Posterior vena cava (tissue), 2 donors: ENCODE measurements at regions of chr2 and their contacts with region 1.

Region 1: DNA sequence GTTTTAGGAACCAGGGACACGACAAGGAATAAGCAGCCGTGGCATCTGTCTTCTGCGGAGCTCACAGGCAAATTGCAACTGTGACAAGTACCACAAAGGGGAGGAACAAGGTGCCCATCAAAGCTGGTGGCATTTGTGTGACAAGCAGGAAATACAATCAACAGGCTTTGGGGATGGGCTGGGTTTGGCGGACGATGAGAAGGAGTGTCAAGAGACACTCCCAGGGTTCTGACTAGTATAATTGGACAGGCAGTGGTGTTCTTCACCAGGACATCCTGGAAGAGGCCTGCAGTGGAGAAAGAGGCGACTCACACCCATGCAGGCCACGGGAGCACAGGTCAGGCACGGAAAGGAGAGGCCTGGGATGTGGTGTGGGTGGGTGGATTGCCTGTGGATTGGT is 14.2 kb upstream of the SPATA3 start:
- DNase-seq: no peak

Region 2: GRCh38 chr2:230873476-230874451 is 107.9 kb before region 1 on chr2:
- intact Hi-C with region 1: no loop called
- DNase-seq: no peak

Region 3: DNA sequence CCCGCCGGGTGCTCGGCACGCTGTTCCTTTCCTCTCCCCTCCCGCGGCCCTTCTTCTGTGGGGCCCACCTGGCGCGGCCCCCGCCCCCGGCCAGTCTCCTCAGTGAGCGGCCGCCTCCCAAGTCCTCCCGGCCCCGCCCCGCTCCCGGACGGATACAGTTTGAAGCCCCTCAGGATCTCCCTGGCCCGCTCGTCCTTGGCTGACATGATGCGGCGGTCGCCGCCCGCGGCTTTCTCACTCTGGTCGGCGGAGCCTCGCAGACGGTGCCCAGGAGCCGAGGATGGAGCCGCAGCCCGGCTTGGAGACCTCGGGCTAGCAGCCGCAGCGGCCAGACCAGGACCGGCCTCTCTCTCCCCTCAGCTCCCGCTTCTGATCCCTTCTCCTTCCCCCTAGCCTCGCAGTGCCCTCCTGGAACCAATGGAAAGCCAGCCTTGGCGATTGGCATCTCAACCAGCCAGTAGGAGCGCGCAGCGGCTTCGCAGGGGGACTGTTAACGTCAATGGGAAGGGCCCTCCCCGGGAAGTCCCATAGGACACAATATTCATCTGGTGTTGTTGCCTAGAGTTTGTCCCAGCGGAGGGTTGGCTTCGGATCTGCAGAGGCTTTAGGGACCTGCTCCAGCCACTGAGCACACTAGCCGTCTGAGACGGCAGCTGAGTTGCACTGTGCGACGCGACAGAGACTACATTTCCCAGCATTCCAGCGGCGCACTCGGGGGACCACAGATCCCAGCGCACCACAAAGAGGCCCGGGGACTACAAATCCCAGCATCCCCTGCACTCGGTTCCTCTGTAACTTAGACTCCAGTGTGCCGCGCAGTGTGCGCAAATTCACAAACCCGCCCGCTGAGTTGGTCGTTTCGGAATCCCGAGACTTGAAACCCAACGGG is 799.4 kb after region 1 on chr2 and contains the start of gene PDE6D:
- intact Hi-C with region 1: loop called in 1 of 2 experiments (anchors 5 kb)
- DNase-seq: peak; percentile 99
- total RNA-seq, gene PDE6D: 21.4 to 22.0 TPM